IMR-90 (cell line): ENCODE measurements at regions of chr4 and their contacts with region 1.

Region 1: GRCh38 chr4:76984127-76984526 is 34.6 kb downstream of the SEPTIN11 start:
- DNase-seq: peak; percentile 69
- ATAC-seq: no peak
- H3K4me3 ChIP-seq: no peak overlapping the region
- H3K27ac ChIP-seq: peak overlapping the region; percentile 12
- H3K4me1 ChIP-seq: peaks cover 36% of the 10 kb centered on the region
- H3K27me3 ChIP-seq: no peaks in the 10 kb centered on the region
- CTCF ChIP-seq: peak; percentile 50
- POLR2A ChIP-seq: no peak
- RAD21 ChIP-seq: peak; percentile 36

Region 2: GRCh38 chr4:76881375-76881774 is 102.8 kb before region 1 on chr4:
- CTCF ChIA-PET with region 1: no interaction called
- POLR2A ChIA-PET with region 1: no interaction called
- dilution Hi-C with region 1: no loop called
- in situ Hi-C with region 1: no loop called
- intact Hi-C with region 1: no loop called
- DNase-seq: no peak
- ATAC-seq: no peak
- H3K4me3 ChIP-seq: no peak overlapping the region
- H3K27ac ChIP-seq: no peak overlapping the region; the same call in 1 of the 2 replicates
- H3K4me1 ChIP-seq: peaks cover 5% of the 10 kb centered on the region; the same call in 1 of the 2 replicates
- H3K27me3 ChIP-seq: no peaks in the 10 kb centered on the region
- CTCF ChIP-seq: no peak
- POLR2A ChIP-seq: no peak
- RAD21 ChIP-seq: no peak

Region 3: GRCh38 chr4:77022560-77023179 is 38.5 kb after region 1 on chr4:
- CTCF ChIA-PET with region 1: no interaction called
- POLR2A ChIA-PET with region 1: no interaction called
- dilution Hi-C with region 1: no loop called
- in situ Hi-C with region 1: no loop called
- intact Hi-C with region 1: loop called (anchors 5 kb)
- DNase-seq: peak; percentile 81
- ATAC-seq: peak; percentile 67
- H3K4me3 ChIP-seq: no peak overlapping the region
- H3K27ac ChIP-seq: peak overlapping the region; percentile 65
- H3K4me1 ChIP-seq: peaks cover 23% of the 10 kb centered on the region
- H3K27me3 ChIP-seq: no peaks in the 10 kb centered on the region
- CTCF ChIP-seq: no peak
- POLR2A ChIP-seq: no peak
- RAD21 ChIP-seq: no peak

Region 4: GRCh38 chr4:77036206-77036605 is 52.1 kb after region 1 on chr4:
- CTCF ChIA-PET with region 1: interaction called, 4 read pairs
- POLR2A ChIA-PET with region 1: interaction called, 5 read pairs
- dilution Hi-C with region 1: no loop called
- in situ Hi-C with region 1: no loop called
- intact Hi-C with region 1: loop called (anchors 1 kb)
- DNase-seq: peak; percentile 94
- ATAC-seq: peak; percentile 78
- H3K4me3 ChIP-seq: no peak overlapping the region
- H3K27ac ChIP-seq: peak overlapping the region; percentile 36; the same call in 1 of the 2 replicates
- H3K4me1 ChIP-seq: peaks cover 27% of the 10 kb centered on the region
- H3K27me3 ChIP-seq: no peaks in the 10 kb centered on the region
- CTCF ChIP-seq: no peak
- POLR2A ChIP-seq: no peak
- RAD21 ChIP-seq: no peak